PC-9 (cell line): ENCODE measurements at regions of chr10 and their contacts with region 1.

Region 1: GRCh38 chr10:92419740-92420545 is 129.0 kb downstream of the MARCHF5 start:
- DNase-seq: no peak
- H3K4me3 ChIP-seq: no peak overlapping the region
- H3K27ac ChIP-seq: no peak overlapping the region
- H3K4me1 ChIP-seq: no peaks in the 10 kb centered on the region
- H3K27me3 ChIP-seq: no peaks in the 10 kb centered on the region
- CTCF ChIP-seq: no peak

Region 2: GRCh38 chr10:92404612-92405418 is 15.1 kb before region 1 on chr10:
- CTCF ChIA-PET with region 1: interaction called, 10 read pairs
- POLR2A ChIA-PET with region 1: no interaction called
- intact Hi-C with region 1: no loop called
- DNase-seq: no peak
- H3K4me3 ChIP-seq: no peak overlapping the region
- H3K27ac ChIP-seq: no peak overlapping the region
- H3K4me1 ChIP-seq: no peaks in the 10 kb centered on the region
- H3K27me3 ChIP-seq: no peaks in the 10 kb centered on the region
- CTCF ChIP-seq: no peak